HepG2 (cell line): ENCODE measurements at regions of chr1 and their contacts with region 1.

Region 1: GRCh38 chr1:153990468-153991150 is at the start of gene RPS27:
- DNase-seq: peak; percentile 98
- ATAC-seq: peak; percentile 24
- H3K4me3 ChIP-seq: peak within 1 kb of the TSS; percentile 77 to 97 (median 94)
- H3K27ac ChIP-seq: peak within 1 kb of the TSS; percentile 85
- H3K4me1 ChIP-seq: peaks cover 27% of the 10 kb centered on the region
- H3K27me3 ChIP-seq: no peaks in the 10 kb centered on the region; a peak in 1 of 5 replicates
- CTCF ChIP-seq: no peak
- EP300 ChIP-seq: peak; percentile 22 to 76; a peak in 3 of 4 replicates
- POLR2A ChIP-seq: peak; percentile 100
- RAD21 ChIP-seq: 0 out of 2 replicates have a peak, but pooled peaks have one; percentile 25
- total RNA-seq, gene RPS27: 3,737 and 4,047 TPM in 2 replicates

Region 2: GRCh38 chr1:153727463-153728304 is 262.9 kb before region 1 on chr1 and contains the start of gene INTS3:
- CTCF ChIA-PET with region 1: no interaction called
- POLR2A ChIA-PET with region 1: interaction called, 10 read pairs
- in situ Hi-C with region 1: no loop called
- intact Hi-C with region 1: no loop called
- DNase-seq: peak; percentile 99
- ATAC-seq: peak; percentile 99
- H3K4me3 ChIP-seq: peak within 1 kb of the TSS; percentile 89 to 95 (median 92)
- H3K27ac ChIP-seq: peak within 1 kb of the TSS; percentile 95
- H3K4me1 ChIP-seq: peaks cover 46% of the 10 kb centered on the region
- H3K27me3 ChIP-seq: no peaks in the 10 kb centered on the region; a peak in 1 of 5 replicates
- CTCF ChIP-seq: no peak
- EP300 ChIP-seq: no peak
- POLR2A ChIP-seq: peak; percentile 73 to 76
- RAD21 ChIP-seq: no peak
- total RNA-seq, gene INTS3: 14.7 and 17.2 TPM in 2 replicates

Region 3: GRCh38 chr1:153783233-153784190 is 207.1 kb before region 1 on chr1:
- CTCF ChIA-PET with region 1: no interaction called
- POLR2A ChIA-PET with region 1: interaction called, 13 read pairs
- in situ Hi-C with region 1: no loop called
- intact Hi-C with region 1: no loop called
- DNase-seq: peak; percentile 71
- ATAC-seq: peak; percentile 91
- H3K4me3 ChIP-seq: peak overlapping the region; percentile 72 to 78 (median 76)
- H3K27ac ChIP-seq: peak overlapping the region; percentile 79
- H3K4me1 ChIP-seq: peaks cover 46% of the 10 kb centered on the region
- H3K27me3 ChIP-seq: no peaks in the 10 kb centered on the region
- CTCF ChIP-seq: peak; percentile 14; the same call in 1 of the 2 replicates
- EP300 ChIP-seq: no peak; a peak in 1 of 4 replicates
- POLR2A ChIP-seq: peak; percentile 85 to 96
- RAD21 ChIP-seq: no peak

Region 4: GRCh38 chr1:153816283-153816889 is 174.2 kb before region 1 on chr1:
- CTCF ChIA-PET with region 1: interaction called, 21 read pairs
- POLR2A ChIA-PET with region 1: interaction called, 4 read pairs
- in situ Hi-C with region 1: no loop called
- intact Hi-C with region 1: loop called (anchors 1 kb)
- DNase-seq: no peak
- ATAC-seq: no peak
- H3K4me3 ChIP-seq: no peak overlapping the region
- H3K27ac ChIP-seq: no peak overlapping the region
- H3K4me1 ChIP-seq: no peaks in the 10 kb centered on the region
- H3K27me3 ChIP-seq: no peaks in the 10 kb centered on the region
- CTCF ChIP-seq: no peak
- EP300 ChIP-seq: no peak
- POLR2A ChIP-seq: no peak
- RAD21 ChIP-seq: no peak

Region 5: DNA sequence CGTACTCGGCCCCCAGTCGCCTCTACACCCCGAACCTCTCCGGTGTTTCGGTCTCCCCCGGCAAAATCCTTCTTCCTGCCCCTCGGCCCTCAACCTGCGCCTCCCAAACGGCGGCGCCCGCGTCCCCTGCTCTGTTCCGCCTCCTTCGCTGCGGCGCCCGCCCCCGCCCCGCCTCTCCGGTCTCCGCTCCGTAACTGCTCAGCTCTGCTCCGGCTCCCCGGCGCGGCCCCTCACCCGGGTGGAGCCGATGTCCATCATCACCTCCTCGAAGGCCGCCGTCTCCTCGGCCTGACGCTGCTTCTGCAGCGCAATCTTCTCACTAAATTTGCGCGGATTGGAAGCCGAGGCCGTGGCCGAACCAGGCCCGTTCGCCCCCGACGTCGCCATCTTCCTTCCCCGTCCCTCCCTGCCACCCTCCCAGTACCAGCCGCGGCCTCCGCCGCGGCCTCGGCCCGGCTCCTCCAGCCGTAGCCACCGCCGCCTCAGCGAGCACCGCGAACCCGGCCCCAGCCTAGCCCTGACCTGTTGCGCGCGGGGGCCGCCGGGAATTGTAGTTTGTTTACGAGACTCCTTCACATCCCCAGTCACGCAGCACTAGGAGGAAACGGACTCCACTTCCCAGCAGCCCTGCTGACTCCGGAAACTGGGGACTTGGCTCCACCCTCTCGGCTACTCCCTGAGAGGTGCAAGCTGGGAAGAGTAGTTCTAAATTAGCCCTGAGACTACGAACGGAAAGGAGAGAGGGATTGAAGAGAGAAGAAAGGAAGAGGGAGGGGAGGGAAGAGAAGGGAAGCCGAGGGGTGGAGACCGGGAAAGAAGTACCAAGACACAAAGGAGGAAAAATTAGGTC is 32.3 kb before region 1 on chr1 and contains the start of gene CRTC2:
- CTCF ChIA-PET with region 1: no interaction called
- POLR2A ChIA-PET with region 1: interaction called, 42 read pairs
- in situ Hi-C with region 1: no loop called
- intact Hi-C with region 1: no loop called
- DNase-seq: peak; percentile 96
- ATAC-seq: peak; percentile 81
- H3K4me3 ChIP-seq: peak within 1 kb of the TSS; percentile 89 to 99 (median 92)
- H3K27ac ChIP-seq: peak within 1 kb of the TSS; percentile 75
- H3K4me1 ChIP-seq: peaks cover 67% of the 10 kb centered on the region
- H3K27me3 ChIP-seq: peaks cover 0 to 7% of the 10 kb centered on the region in 2 experiments; a peak in 1 of 5 replicates
- CTCF ChIP-seq: peak; percentile 40; the same call in 1 of the 2 replicates
- EP300 ChIP-seq: no peak; a peak in 1 of 4 replicates
- POLR2A ChIP-seq: peak in 1 of 2 experiments; percentile 71; a peak in 3 of 4 replicates
- RAD21 ChIP-seq: 0 out of 2 replicates have a peak, but pooled peaks have one; percentile 27
- total RNA-seq, gene CRTC2: 4.0 and 6.1 TPM in 2 replicates

Region 6: DNA sequence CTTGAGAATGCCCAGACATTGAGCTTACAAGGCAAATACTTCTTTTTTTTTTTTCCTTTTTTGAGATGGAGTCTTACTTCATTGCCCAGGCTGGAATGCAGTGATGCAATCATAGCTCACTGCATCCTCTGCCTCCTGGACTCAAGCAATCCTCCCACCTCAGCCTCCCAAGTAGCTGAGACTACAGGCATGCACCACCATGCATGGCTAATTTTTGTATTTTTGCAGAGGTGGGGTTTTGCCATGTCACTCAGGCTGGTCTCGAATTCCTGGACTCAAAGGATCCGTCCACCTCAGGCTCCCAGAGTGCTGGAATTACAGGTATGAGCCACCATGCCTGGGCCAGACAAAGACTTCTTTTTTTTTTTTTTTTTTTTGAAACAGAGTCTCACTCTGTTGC is 85.1 kb after region 1 on chr1:
- CTCF ChIA-PET with region 1: no interaction called
- POLR2A ChIA-PET with region 1: no interaction called
- in situ Hi-C with region 1: no loop called
- intact Hi-C with region 1: no loop called
- DNase-seq: no peak
- ATAC-seq: no peak
- H3K4me3 ChIP-seq: no peak overlapping the region
- H3K27ac ChIP-seq: no peak overlapping the region
- H3K4me1 ChIP-seq: no peaks in the 10 kb centered on the region
- H3K27me3 ChIP-seq: no peaks in the 10 kb centered on the region
- CTCF ChIP-seq: no peak
- EP300 ChIP-seq: no peak
- POLR2A ChIP-seq: no peak
- RAD21 ChIP-seq: no peak

Region 7: DNA sequence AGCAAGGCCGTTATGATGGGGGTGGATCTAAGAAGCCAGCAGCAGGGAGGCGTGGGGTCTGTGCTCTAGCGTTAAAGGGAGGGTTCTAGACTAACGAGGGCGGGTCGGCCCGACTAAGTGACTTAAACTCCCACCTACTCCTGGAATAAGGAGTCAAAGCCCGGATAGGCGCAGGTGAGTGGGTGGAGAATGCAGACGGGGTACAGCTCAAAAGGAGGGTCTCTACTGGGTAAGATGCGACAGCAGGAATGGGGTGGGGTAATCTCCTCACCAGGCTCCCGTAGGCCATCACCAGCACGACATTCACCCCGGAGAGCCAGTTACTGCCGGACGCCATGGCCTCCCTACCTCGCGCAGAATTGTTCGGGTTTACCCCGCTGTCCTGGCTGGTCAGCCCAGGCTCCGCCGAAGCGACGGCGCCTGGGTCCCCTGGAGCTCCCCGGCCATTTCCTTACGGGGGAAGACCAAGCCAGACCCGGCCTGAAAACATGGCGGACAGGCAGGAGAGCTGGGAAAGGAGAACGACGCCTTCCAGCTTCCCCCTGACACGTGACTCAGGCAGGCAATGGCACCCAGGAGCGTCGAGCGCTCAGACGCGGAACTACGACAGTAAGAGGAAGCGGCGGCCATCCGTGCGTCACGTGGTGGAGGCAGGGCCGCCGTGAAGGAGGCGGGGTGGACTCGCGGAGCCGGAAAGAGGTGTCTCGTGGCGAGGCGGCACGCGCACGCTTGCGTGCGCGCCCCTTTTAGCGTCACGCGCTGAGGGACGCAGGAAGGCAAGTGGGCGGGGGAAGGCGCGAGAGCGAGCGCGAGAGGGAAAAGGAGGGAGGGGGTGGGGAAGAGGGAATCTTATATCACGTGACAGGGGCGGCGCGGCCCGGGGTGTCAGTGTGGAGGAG is 229.7 kb after region 1 on chr1 and contains the start of gene UBAP2L:
- CTCF ChIA-PET with region 1: no interaction called
- POLR2A ChIA-PET with region 1: interaction called, 15 read pairs
- in situ Hi-C with region 1: no loop called
- intact Hi-C with region 1: no loop called
- DNase-seq: peak; percentile 98
- ATAC-seq: peak; percentile 95
- H3K4me3 ChIP-seq: peak within 1 kb of the TSS; percentile 90 to 99 (median 96)
- H3K27ac ChIP-seq: peak within 1 kb of the TSS; percentile 100
- H3K4me1 ChIP-seq: peaks cover 79% of the 10 kb centered on the region
- H3K27me3 ChIP-seq: no peaks in the 10 kb centered on the region; a peak in 1 of 5 replicates
- CTCF ChIP-seq: 0 out of 2 replicates have a peak, but pooled peaks have one; percentile 4
- EP300 ChIP-seq: peak in 1 of 2 experiments; percentile 39; a peak in 1 of 4 replicates
- POLR2A ChIP-seq: peak; percentile 73 to 87
- RAD21 ChIP-seq: no peak; the same call in 1 of the 2 replicates
- total RNA-seq, gene UBAP2L: 74.2 and 75.9 TPM in 2 replicates